ENCODE measurements at regions of chr12 and their contacts with region 1.

Region 1: GRCh38 chr12:118979763-118980406 is 1.5 kb upstream of the SRRM4 start:
- DNase-seq: peak in 4 of 5 donors; percentile 21 to 42 (median 29)
- ATAC-seq: peak in 3 of 4 donors; percentile 52 to 60 (median 55)
- H3K4me3 ChIP-seq: no peak overlapping the region
- H3K27ac ChIP-seq: no peak overlapping the region
- H3K4me1 ChIP-seq: peaks cover 0 to 20% (median 1%) of the 10 kb centered on the region in 12 donors
- H3K27me3 ChIP-seq: peaks cover 12 to 79% (median 37%) of the 10 kb centered on the region in 9 donors
- CTCF ChIP-seq: peak; percentile 49 to 73 (median 62)
- POLR2A ChIP-seq: no peak

Region 2: GRCh38 chr12:118946256-118946655 is 33.6 kb before region 1 on chr12:
- intact Hi-C with region 1: no loop called
- DNase-seq: no peak
- ATAC-seq: no peak
- H3K4me3 ChIP-seq: no peak overlapping the region
- H3K27ac ChIP-seq: no peak overlapping the region
- H3K4me1 ChIP-seq: no peaks in the 10 kb centered on the region
- H3K27me3 ChIP-seq: peaks cover 0 to 44% (median 8%) of the 10 kb centered on the region in 9 donors
- CTCF ChIP-seq: no peak
- POLR2A ChIP-seq: no peak

Region 3: DNA sequence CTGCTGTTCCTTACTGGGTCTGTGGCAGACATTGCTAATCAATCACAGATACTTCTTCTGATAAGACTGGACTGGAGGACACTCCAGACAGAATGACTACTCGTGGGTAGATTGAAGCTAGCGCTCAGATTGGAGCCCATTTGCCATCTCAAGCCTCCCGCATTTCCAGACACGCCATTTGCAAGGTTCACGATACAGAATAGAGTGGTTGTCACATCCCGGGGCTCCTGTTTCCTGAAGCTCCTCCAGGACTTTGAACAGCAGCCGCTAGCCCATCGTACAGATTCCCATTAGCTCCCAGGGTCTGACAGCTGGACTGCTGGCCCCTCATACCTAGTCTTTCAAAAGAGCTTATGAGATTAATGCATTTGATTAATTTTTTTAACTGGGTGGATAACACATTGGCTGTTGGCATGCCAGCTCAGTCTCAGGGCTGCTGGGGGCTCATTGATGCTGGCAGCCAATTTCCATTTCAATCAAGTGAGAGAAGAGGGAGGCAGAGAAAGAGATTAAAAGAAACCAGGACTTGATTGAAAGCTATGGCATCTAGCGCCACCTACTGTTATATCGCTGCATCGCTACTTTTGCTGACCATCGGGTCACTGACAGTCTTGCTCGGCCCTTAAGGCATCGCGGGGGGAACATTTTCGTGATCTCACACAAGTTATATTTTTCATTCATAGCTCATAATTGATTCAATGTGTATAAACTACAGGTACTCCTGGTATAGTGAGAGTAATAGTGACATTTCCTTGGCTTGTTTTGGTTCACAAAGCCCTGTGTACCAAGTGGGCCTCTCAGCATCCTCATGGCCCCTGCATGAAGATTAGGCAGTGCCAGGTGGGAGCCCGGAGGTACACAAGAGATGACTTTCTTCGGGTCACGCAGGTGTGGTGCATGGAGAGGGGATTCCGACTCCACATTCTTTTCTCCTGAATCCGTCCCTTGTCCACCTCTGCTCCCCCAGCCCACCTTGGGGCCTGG is 433.2 kb after region 1 on chr12:
- intact Hi-C with region 1: loop called in 8 of 10 experiments (anchors 5 to 10 kb)
- DNase-seq: peak in 4 of 5 donors; percentile 53 to 67 (median 58)
- ATAC-seq: peak in 3 of 4 donors; percentile 42 to 73 (median 58)
- H3K4me3 ChIP-seq: no peak overlapping the region
- H3K27ac ChIP-seq: no peak overlapping the region
- H3K4me1 ChIP-seq: peaks cover 0 to 6% (median 0%) of the 10 kb centered on the region in 12 donors
- H3K27me3 ChIP-seq: no peaks in the 10 kb centered on the region
- CTCF ChIP-seq: peak; percentile 82 to 93 (median 90)
- POLR2A ChIP-seq: no peak

Measured in heart left ventricle (tissue), 16 donors.